ENCODE measurements at regions of chr12 and their contacts with region 1.

Region 1: GRCh38 chr12:107670999-107671643 is 14.5 kb upstream of the PWP1 start:
- DNase-seq: peak; percentile 44
- H3K4me3 ChIP-seq: no peak overlapping the region
- H3K27ac ChIP-seq: no peak overlapping the region
- H3K4me1 ChIP-seq: no peaks in the 10 kb centered on the region
- H3K27me3 ChIP-seq: peaks cover 29% of the 10 kb centered on the region
- CTCF ChIP-seq: peak; percentile 87

Region 2: GRCh38 chr12:106417926-106418910 is 1252.9 kb before region 1 on chr12:
- CTCF ChIA-PET with region 1: no interaction called
- POLR2A ChIA-PET with region 1: no interaction called
- intact Hi-C with region 1: no loop called
- DNase-seq: peak; percentile 22
- H3K4me3 ChIP-seq: no peak overlapping the region
- H3K27ac ChIP-seq: no peak overlapping the region
- H3K4me1 ChIP-seq: peaks cover 12% of the 10 kb centered on the region
- H3K27me3 ChIP-seq: no peaks in the 10 kb centered on the region
- CTCF ChIP-seq: no peak

Region 3: DNA sequence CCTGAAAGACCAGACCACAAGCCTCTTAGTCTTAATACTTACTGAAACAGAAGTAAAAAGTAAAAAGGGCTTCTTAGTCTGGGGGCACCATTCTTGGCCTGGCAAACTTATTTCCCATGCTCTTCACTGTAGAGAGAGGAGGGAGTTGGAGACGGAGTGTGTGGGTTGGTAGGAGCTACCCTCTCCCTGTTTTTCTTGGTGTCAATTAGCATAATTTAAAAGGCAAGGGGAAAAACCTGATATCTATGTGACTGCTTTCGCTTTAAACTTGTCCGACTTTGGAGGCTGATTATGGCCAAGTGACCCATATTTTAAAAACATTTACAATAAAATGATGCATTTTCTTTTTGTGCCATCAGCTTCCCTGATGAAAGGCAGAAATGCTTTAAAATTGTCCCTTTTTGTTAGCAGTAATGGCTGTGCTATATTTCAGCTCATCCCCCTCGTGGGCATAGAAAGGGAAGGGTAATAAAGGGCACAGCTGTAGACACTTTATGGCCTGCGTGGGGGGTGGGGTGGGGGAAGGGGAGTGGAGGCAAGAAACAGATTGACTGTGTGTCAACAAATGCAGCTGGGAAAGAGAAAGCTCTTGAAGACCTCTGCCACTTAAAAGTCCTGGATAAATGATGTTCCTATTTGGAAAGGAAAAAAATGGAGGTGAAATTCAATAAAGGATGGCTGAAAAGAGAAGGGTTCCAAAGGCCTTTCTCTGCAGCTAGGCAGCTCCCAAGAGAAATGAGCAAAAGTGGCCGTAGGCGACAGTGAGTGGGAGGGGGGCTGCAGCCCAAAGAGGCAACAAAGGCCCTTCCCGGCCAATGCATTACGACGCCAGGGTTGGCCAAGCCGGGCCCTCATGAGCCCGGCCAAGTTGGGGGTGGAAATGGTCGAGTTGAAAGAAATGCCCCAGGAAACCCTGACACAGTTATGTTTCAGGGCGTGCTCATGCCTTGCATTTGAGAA is 772.9 kb before region 1 on chr12:
- CTCF ChIA-PET with region 1: interaction called, 11 read pairs
- POLR2A ChIA-PET with region 1: no interaction called
- intact Hi-C with region 1: no loop called
- DNase-seq: peak; percentile 36
- H3K4me3 ChIP-seq: no peak overlapping the region
- H3K27ac ChIP-seq: no peak overlapping the region
- H3K4me1 ChIP-seq: peaks cover 3% of the 10 kb centered on the region
- H3K27me3 ChIP-seq: no peaks in the 10 kb centered on the region
- CTCF ChIP-seq: no peak

Region 4: DNA sequence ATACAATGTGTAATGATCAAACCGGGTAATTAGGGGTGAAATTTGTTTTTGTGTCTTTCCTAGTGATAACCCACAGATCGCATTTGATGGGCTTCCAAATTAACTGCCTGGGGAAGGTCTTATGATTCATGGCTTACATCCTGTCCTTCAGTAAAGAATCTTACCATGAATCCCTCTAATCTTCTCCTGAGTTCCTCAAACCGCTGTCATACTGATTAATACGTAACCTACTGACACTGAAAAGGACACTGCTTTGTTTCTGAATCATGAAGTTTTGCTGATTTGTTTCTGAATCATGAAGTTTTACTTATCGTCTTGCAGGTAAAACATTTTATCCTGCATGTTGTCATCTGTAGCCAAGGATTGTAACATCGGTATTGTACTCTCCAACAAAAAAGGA is 525.7 kb before region 1 on chr12:
- CTCF ChIA-PET with region 1: interaction called, 11 read pairs
- POLR2A ChIA-PET with region 1: no interaction called
- intact Hi-C with region 1: no loop called
- DNase-seq: no peak
- H3K4me3 ChIP-seq: no peak overlapping the region
- H3K27ac ChIP-seq: no peak overlapping the region
- H3K4me1 ChIP-seq: no peaks in the 10 kb centered on the region
- H3K27me3 ChIP-seq: no peaks in the 10 kb centered on the region
- CTCF ChIP-seq: no peak

Region 5: GRCh38 chr12:107646436-107646835 is 24.7 kb before region 1 on chr12:
- CTCF ChIA-PET with region 1: interaction called, 12 read pairs
- POLR2A ChIA-PET with region 1: no interaction called
- intact Hi-C with region 1: no loop called
- DNase-seq: no peak
- H3K4me3 ChIP-seq: no peak overlapping the region
- H3K27ac ChIP-seq: peak overlapping the region; percentile 59
- H3K4me1 ChIP-seq: peaks cover 14% of the 10 kb centered on the region
- H3K27me3 ChIP-seq: no peaks in the 10 kb centered on the region
- CTCF ChIP-seq: no peak

Region 6: GRCh38 chr12:107685360-107686248 is 14.5 kb after region 1 on chr12 and contains the start of gene PWP1:
- CTCF ChIA-PET with region 1: interaction called, 19 read pairs
- POLR2A ChIA-PET with region 1: no interaction called
- intact Hi-C with region 1: no loop called
- DNase-seq: peak; percentile 97
- H3K4me3 ChIP-seq: peak within 1 kb of the TSS; percentile 77
- H3K27ac ChIP-seq: peak within 1 kb of the TSS; percentile 79
- H3K4me1 ChIP-seq: peaks cover 11% of the 10 kb centered on the region
- H3K27me3 ChIP-seq: no peaks in the 10 kb centered on the region
- CTCF ChIP-seq: no peak
- total RNA-seq, gene PWP1: 74.7 and 77.7 TPM in 2 replicates

Region 7: GRCh38 chr12:107873223-107873622 is 202.1 kb after region 1 on chr12:
- CTCF ChIA-PET with region 1: interaction called, 10 read pairs
- POLR2A ChIA-PET with region 1: no interaction called
- intact Hi-C with region 1: no loop called
- DNase-seq: no peak
- H3K4me3 ChIP-seq: no peak overlapping the region
- H3K27ac ChIP-seq: no peak overlapping the region
- H3K4me1 ChIP-seq: no peaks in the 10 kb centered on the region
- H3K27me3 ChIP-seq: peaks cover 52% of the 10 kb centered on the region
- CTCF ChIP-seq: no peak

Region 8: DNA sequence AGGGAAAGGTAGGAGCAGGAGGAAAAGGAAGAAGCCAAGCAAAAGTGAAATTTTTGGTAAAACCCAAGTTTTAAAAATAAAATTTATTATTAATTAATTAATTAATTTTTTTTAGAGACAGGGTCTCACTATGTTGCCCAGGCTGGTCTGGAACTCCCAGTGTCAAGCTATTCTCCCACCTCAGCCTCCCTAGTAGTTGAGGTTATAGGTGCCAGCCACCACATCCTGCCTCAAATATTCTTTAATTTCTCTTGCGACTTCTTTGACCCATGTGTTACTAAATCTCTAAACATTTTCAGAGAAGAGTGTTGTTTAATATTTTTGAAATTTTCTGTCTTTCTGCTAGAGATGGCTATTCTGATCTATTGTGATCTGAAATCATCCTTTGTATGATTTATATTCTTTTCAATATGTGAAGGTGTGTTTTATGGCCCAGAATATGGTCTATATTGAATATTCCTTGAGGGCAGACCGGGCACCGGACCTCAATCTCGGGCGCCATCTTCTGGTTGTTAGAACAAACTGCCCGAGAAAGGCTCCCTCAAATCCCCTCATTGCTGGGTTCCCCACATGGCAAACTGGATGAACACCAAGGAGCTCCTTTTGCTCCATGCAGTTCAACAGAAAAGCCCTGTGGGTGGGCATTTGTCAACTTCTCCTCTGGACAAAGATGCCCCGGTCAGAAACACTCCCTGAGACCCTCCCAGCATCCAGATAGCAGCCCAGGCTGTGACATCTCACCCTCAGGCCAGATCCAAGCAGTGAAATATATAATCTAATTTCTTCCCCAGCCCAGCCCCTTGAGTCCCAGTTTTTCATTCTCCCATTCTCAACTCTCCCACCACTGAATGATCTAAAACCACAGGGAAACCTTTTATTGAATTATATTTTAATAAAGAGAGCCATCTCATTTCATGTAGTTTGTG is 213.9 kb after region 1 on chr12:
- CTCF ChIA-PET with region 1: interaction called, 10 read pairs
- POLR2A ChIA-PET with region 1: no interaction called
- intact Hi-C with region 1: loop called (anchors 2 kb)
- DNase-seq: peak; percentile 66
- H3K4me3 ChIP-seq: no peak overlapping the region
- H3K27ac ChIP-seq: no peak overlapping the region
- H3K4me1 ChIP-seq: no peaks in the 10 kb centered on the region
- H3K27me3 ChIP-seq: peaks cover 57% of the 10 kb centered on the region
- CTCF ChIP-seq: peak; percentile 81

Measured in A673 (cell line).